ENCODE measurements at regions of chr1 and their contacts with region 1.

Region 1: DNA sequence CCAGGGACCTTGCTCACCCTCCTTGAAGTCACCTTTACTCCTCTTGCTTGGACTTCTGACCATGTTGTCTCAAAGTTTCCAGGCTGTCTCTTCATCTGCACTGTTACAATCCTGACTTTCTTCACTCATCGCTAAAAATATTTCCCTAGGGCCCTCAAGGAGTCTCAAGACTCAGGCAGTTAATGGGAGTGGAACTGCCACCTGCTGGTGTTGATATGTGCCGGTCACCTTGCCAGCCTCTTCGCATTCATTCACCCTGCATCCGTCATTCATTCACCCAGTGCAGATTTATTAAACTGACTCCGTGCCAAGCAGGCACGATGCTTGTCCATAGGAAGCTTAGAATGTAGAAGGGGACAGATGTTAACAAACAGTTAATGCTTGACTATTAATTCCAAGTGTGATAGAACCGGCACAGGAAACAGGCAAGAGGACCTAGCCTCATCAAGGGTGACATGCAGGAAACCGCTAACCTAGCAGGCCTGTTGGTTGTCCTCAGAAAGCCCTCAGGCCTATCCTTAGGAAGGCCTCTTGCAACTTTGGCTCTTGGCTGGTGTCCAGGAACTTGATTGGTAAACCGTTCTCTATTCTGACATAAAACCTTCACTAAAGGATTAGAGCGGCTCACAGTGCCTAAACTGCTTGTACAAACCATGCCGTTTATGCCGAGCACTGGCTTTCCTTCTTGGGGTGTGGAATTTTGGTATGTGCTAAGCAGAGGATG is 342.2 kb downstream of the CAMTA1 start:
- DNase-seq: no peak
- H3K4me3 ChIP-seq: no peak overlapping the region
- CTCF ChIP-seq: no peak

Region 2: DNA sequence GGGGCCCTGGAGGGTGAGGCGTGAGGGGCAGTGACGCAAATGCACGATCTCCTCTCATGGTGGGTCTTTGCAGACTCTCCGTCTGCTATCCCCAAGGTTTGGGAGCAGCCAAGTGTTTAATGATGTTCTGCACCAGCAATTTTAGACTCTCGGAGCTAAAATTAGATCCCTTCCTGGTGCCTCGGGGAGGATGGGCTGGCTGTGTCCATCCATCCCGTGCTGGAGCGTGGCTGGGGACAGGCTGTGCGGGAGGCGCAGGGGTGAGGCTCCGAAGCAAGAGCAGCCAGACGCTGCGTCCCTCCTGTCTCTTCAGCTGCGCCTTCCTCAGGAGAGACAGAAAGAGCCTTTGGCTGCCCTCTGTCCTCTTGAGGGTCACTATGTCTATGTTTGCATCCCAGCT is 45.3 kb after region 1 on chr1:
- in situ Hi-C with region 1: loop called (anchors 5 kb)
- DNase-seq: no peak
- H3K4me3 ChIP-seq: no peak overlapping the region
- CTCF ChIP-seq: no peak

Region 3: DNA sequence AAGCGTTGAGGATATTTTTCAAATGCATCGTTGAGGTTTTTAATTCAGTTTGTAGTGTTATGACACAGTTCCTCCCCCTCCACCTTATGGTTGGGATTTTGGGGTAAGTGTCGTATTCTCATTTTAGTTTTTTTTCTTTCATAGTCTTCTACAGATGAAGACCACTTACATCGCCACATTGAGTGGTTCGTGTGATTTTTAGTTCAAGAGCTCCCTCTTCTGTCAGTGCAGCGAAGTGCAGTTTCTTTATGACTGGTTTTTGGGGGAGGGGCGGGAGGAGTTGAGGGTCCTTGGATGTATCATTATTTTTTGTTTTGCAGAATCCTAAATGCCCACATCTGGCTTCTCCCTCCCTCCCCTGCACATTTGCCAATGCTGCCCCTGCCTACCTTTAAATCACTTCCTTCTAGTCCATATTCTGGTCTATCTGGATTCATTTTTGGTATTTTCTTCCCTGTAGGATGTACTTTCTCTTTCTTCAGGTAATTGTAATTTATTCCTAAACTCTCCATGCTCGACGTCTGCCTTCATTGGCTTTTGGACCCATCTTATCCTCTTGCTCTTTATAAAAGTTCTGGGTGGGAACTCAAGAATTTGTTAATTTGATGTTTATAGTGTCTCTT is 90.8 kb after region 1 on chr1:
- in situ Hi-C with region 1: no loop called
- DNase-seq: peak; percentile 24
- H3K4me3 ChIP-seq: no peak overlapping the region
- CTCF ChIP-seq: peak; percentile 68